GM10248 (cell line): ENCODE measurements at regions of chr5 and their contacts with region 1.

Region 1: GRCh38 chr5:33748754-33749153 is 143.0 kb downstream of the ADAMTS12 start:
- DNase-seq: no peak
- CTCF ChIP-seq: no peak

Region 2: GRCh38 chr5:33690374-33691135 is 58.2 kb before region 1 on chr5:
- CTCF ChIA-PET with region 1: no interaction called
- POLR2A ChIA-PET with region 1: no interaction called
- DNase-seq: no peak
- CTCF ChIP-seq: no peak

Region 3: GRCh38 chr5:33734537-33734936 is 14.2 kb before region 1 on chr5:
- CTCF ChIA-PET with region 1: interaction called, 10 read pairs
- POLR2A ChIA-PET with region 1: interaction called, 4 read pairs
- DNase-seq: no peak
- CTCF ChIP-seq: no peak

Region 4: GRCh38 chr5:33891788-33892619 is 143.2 kb after region 1 on chr5 and contains the start of gene ADAMTS12:
- CTCF ChIA-PET with region 1: no interaction called
- POLR2A ChIA-PET with region 1: no interaction called
- DNase-seq: peak; percentile 38
- CTCF ChIP-seq: no peak

Region 5: DNA sequence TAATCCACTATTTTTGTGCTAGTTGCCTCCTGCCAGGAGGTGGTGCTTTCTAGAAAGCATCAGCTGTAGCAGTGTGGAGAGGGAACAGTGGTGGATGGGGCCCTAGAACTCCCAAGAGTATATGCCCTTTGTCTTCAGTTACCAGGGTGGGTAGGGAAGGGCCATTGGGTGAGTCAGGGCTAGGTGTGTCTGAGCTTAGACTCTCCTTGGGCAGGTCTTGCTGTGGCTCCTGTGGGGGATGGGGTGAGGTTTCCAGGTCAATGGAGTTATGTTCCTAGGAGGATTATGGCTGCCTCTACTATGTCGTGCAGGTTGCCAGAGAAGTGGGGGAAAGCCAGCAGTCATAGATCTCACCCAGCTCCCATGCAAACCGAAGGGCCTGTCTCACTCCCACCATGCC is 154.4 kb after region 1 on chr5:
- CTCF ChIA-PET with region 1: no interaction called
- POLR2A ChIA-PET with region 1: no interaction called
- DNase-seq: no peak
- CTCF ChIP-seq: no peak

Region 6: DNA sequence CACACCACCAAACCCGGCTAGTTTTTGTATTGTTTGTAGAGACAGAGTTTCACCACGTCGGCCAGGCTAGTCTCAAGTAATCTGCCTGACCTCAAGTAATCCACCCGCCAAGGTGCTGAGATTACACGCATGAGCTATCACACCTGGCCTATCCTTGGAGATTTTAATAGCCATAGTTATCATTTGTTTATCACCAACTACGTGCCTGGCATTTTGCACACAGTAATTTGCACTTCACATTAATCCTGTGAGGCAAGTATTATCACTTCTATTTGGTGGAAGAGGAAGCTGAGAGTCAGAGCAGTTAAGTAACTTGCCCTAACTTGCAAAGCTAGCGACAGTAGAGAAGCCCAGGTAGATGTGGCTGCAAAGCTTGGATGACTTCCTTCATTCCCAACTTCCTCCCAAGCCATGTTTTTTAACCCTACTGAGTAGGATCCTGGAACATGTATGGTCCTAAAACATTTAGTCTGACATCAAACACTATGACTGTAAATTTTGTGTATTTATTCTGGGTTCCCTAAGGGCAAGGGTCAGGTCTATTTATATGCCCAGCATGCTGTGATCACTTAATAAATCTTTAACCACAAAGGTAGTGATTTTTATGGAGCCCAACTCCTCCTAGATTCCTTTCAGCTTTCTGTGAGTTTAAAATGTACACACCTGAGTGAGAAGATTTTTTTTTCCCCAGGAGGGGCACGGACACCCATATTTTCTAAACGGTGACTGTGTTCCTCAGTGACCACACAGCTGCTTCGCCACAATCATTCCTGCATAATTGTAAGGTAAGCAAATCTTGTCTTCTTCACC is 807.1 kb after region 1 on chr5:
- CTCF ChIA-PET with region 1: no interaction called
- POLR2A ChIA-PET with region 1: no interaction called
- DNase-seq: no peak
- CTCF ChIP-seq: no peak